ENCODE measurements at regions of chr17 and their contacts with region 1.

Region 1: DNA sequence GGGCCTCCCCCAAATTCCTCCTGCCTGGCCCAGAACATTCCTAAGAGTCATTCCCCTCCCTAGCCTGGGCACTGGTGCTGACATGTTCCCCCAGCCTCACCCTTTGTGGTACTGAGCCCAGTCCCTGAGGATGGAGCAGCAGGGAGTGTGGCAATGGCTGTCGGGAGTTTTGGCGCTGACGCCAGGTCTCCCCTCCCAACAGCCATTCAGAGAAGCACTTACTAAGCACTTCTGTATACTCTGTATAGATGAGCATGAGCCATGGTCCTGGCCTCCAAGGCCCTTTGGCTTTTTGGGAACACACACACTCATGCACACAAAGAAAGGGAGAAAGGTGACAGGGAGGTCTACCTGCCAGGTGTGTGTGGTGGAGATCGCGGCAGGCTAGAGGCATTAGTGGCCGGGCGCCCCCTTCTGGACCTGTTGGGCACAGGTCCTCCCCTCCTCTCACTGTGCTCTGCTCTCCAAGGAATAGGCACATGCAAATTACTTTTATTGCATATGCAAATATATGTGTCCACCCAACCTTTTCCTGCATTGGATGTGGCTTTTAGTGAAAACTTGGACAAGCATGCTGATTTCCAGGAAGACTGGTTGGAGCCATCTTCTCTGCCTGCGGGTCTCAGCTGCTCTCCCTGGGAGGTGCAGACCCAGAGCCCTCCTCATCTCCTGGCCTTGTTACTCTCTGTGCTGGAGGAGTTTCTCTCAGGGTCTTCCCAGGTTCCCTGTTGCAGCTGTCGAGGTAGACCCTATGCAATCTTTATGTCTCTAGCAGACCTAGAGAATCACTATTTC is 17.4 kb upstream of the C17orf107 start:
- DNase-seq: peak in 2 of 3 donors; percentile 41 to 54
- H3K4me3 ChIP-seq: no peak overlapping the region
- H3K4me3 Mint-ChIP-seq: no peak overlapping the region
- H3K27ac ChIP-seq: no peak overlapping the region
- H3K27ac Mint-ChIP-seq: peak overlapping the region in 2 of 7 donors; percentile 1 to 46
- H3K4me1 ChIP-seq: peaks cover 26 to 38% of the 10 kb centered on the region in 2 donors
- H3K4me1 Mint-ChIP-seq: peaks cover 33% of the 10 kb centered on the region
- H3K27me3 ChIP-seq: no peaks in the 10 kb centered on the region
- H3K27me3 Mint-ChIP-seq: peaks cover 1 to 6% (median 5%) of the 10 kb centered on the region in 3 donors
- CTCF ChIP-seq: peak; percentile 92

Region 2: GRCh38 chr17:4806777-4807604 is 75.0 kb before region 1 on chr17 and contains the start of gene PLD2:
- intact Hi-C with region 1: loop called (anchors 5 to 10 kb)
- DNase-seq: peak; percentile 69 to 80 (median 71)
- H3K4me3 ChIP-seq: peak within 1 kb of the TSS; percentile 54 to 91 (median 81)
- H3K4me3 Mint-ChIP-seq: peak within 1 kb of the TSS; percentile 86 to 90
- H3K27ac ChIP-seq: peak within 1 kb of the TSS in 1 of 2 donors; percentile 86
- H3K27ac Mint-ChIP-seq: peak within 1 kb of the TSS in 6 of 7 donors; percentile 45 to 92 (median 65)
- H3K4me1 ChIP-seq: peaks cover 10 to 11% of the 10 kb centered on the region in 2 donors
- H3K4me1 Mint-ChIP-seq: peaks cover 24% of the 10 kb centered on the region
- H3K27me3 ChIP-seq: peaks cover 3 to 28% of the 10 kb centered on the region in 2 donors
- H3K27me3 Mint-ChIP-seq: peaks cover 24 to 48% (median 44%) of the 10 kb centered on the region in 3 donors
- CTCF ChIP-seq: no peak
- polyA plus RNA-seq, gene PLD2: 3.5 to 122 (median 4.0) TPM

Region 3: DNA sequence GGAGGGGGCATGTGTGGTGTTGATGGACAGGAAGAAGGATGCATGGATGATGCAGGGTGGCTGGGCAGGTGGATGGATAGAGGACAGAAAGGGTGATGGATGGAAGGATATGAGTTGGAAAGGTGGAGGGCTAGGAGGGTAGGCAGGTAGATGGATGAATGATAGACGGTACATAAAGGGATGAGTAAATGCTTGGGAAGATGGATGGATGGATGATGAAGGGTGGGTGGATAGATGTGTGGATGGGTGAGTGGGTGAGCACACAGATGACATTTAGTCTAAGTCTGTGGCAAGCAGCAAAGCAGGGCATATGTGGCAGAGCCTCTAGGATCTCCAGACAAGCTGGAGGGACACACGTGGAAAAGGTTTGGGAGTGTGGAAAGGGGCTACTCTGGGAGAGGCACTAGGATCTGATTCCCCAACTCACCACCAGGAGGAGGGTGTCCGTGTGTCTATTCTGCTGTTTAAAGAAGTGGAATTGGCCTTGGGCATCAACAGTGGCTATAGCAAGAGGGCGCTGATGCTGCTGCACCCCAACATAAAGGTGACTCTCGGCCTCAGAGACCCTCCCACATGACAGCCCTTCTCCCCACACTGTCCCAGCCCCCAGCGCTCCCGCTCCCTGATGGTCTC is 66.8 kb before region 1 on chr17:
- intact Hi-C with region 1: loop called in 1 of 2 experiments (anchors 10 kb)
- DNase-seq: no peak
- H3K4me3 ChIP-seq: no peak overlapping the region
- H3K4me3 Mint-ChIP-seq: no peak overlapping the region
- H3K27ac ChIP-seq: no peak overlapping the region
- H3K27ac Mint-ChIP-seq: peak overlapping the region in 1 of 7 donors; percentile 17
- H3K4me1 ChIP-seq: no peaks in the 10 kb centered on the region
- H3K4me1 Mint-ChIP-seq: peaks cover 5% of the 10 kb centered on the region
- H3K27me3 ChIP-seq: no peaks in the 10 kb centered on the region
- H3K27me3 Mint-ChIP-seq: peaks cover 3 to 14% (median 7%) of the 10 kb centered on the region in 3 donors
- CTCF ChIP-seq: no peak

Region 4: DNA sequence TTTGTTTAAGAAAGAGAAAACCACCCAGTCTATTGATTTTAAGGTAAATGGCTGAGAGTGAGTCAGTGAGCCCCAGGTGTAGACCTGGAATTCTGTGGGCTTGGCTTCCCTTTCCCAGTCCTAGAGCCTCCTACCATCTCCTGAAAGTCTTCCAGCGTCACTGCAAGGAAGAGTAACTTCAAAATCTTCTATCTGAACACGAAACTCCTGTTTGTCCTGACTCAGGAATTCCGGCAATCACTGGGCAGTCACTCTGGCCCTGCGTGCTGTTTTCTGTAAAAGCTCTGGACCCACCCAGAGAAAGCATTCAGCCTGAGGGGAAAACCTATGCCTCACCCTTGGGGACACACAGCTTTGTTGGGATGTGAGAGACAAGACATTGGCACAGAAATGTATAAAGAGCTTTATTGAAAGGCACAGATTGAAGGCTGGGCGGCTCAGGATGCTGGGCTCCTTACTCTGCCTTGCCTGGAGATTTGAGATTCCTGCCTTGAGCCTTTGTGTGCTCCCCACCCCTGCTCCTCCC is 32.9 kb before region 1 on chr17:
- intact Hi-C with region 1: loop called in 1 of 2 experiments (anchors 5 kb)
- DNase-seq: no peak
- H3K4me3 ChIP-seq: no peak overlapping the region
- H3K4me3 Mint-ChIP-seq: no peak overlapping the region
- H3K27ac ChIP-seq: no peak overlapping the region
- H3K27ac Mint-ChIP-seq: peak overlapping the region in 1 of 7 donors; percentile 58
- H3K4me1 ChIP-seq: peaks cover 57 to 60% of the 10 kb centered on the region in 2 donors
- H3K4me1 Mint-ChIP-seq: peaks cover 75% of the 10 kb centered on the region
- H3K27me3 ChIP-seq: no peaks in the 10 kb centered on the region
- H3K27me3 Mint-ChIP-seq: peaks cover 0 to 6% (median 5%) of the 10 kb centered on the region in 3 donors
- CTCF ChIP-seq: no peak

Measured in CD14-positive monocyte (primary cell).